ENCODE measurements at regions of chr4 and their contacts with region 1.

Region 1: GRCh38 chr4:155667568-155668511 is 1.2 kb downstream of the GUCY1A1 start:
- DNase-seq: peak; percentile 66
- H3K4me3 ChIP-seq: peak overlapping the region; percentile 39 to 83 (median 46)
- H3K27ac ChIP-seq: no peak overlapping the region
- H3K4me1 ChIP-seq: peaks cover 19% of the 10 kb centered on the region
- H3K27me3 ChIP-seq: peaks cover 12 to 16% of the 10 kb centered on the region in 2 experiments
- CTCF ChIP-seq: no peak
- POLR2A ChIP-seq: no peak

Region 2: GRCh38 chr4:154877110-154877760 is 790.6 kb before region 1 on chr4:
- CTCF ChIA-PET with region 1: no interaction called
- POLR2A ChIA-PET with region 1: no interaction called
- dilution Hi-C with region 1: no loop called
- intact Hi-C with region 1: no loop called
- DNase-seq: peak; percentile 6
- H3K4me3 ChIP-seq: no peak overlapping the region
- H3K27ac ChIP-seq: no peak overlapping the region
- H3K4me1 ChIP-seq: no peaks in the 10 kb centered on the region
- H3K27me3 ChIP-seq: no peaks in the 10 kb centered on the region
- CTCF ChIP-seq: no peak
- POLR2A ChIP-seq: no peak

Region 3: GRCh38 chr4:155615081-155615887 is 52.6 kb before region 1 on chr4:
- CTCF ChIA-PET with region 1: no interaction called
- POLR2A ChIA-PET with region 1: no interaction called
- dilution Hi-C with region 1: no loop called
- intact Hi-C with region 1: no loop called
- DNase-seq: peak; percentile 37
- H3K4me3 ChIP-seq: no peak overlapping the region
- H3K27ac ChIP-seq: no peak overlapping the region
- H3K4me1 ChIP-seq: peaks cover 7% of the 10 kb centered on the region
- H3K27me3 ChIP-seq: no peaks in the 10 kb centered on the region
- CTCF ChIP-seq: no peak
- POLR2A ChIP-seq: no peak

Region 4: GRCh38 chr4:155629183-155629825 is 38.5 kb before region 1 on chr4:
- CTCF ChIA-PET with region 1: interaction called, 3 read pairs
- POLR2A ChIA-PET with region 1: no interaction called
- dilution Hi-C with region 1: no loop called
- intact Hi-C with region 1: loop called (anchors 2 kb)
- DNase-seq: peak; percentile 93
- H3K4me3 ChIP-seq: no peak overlapping the region
- H3K27ac ChIP-seq: peak overlapping the region; percentile 11
- H3K4me1 ChIP-seq: peaks cover 15% of the 10 kb centered on the region
- H3K27me3 ChIP-seq: no peaks in the 10 kb centered on the region
- CTCF ChIP-seq: no peak
- POLR2A ChIP-seq: no peak

Region 5: DNA sequence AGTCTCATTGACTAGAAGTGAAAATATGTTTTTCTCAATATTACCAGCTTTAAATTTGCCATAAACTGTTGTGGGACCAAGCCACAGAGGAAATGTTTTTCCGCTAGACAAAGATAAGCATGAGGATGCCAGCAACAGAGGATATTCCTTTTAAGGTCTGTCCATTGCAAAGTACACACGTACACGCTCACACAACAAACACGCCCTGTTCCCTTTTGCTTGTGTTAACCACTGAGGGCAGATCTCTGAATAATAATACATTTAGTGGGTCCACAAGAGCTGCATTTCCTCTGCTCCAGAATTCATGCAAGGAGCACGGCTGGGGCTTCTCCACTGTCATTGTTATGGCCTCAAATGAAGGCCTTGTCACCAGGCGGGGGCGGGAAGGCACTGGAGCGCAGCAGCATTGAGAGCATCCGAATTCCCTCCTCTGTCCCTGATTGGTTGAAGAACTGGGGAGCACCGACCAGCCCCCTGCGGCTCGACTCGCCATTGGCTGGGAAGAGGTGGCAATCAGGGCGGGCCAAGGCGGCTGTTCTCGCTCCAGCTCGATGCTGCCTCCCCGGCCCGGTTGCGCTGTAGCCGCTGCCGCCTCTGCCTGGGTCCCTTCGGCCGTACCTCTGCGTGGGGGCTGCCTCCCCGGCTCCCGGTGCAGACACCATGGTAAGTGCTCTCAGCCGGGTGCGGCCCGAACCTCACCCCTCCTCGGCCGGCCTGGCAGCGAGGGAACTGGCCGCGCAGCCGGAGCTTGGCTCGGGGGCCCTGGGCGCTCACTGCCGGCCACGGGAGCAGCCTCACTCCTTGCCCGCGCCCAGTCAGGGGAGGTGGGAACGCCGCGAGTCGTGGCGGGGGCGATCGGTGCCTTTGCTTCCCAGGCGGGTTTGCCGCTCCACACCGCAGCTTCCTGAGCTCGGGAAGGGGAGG is 90.9 kb after region 1 on chr4 and contains the start of gene GUCY1B1:
- CTCF ChIA-PET with region 1: no interaction called
- POLR2A ChIA-PET with region 1: no interaction called
- dilution Hi-C with region 1: no loop called
- intact Hi-C with region 1: loop called (anchors 1 kb)
- DNase-seq: peak; percentile 95
- H3K4me3 ChIP-seq: peak within 1 kb of the TSS; percentile 32 to 53 (median 44)
- H3K27ac ChIP-seq: no peak within 1 kb of the TSS
- H3K4me1 ChIP-seq: peaks cover 6% of the 10 kb centered on the region
- H3K27me3 ChIP-seq: no peaks in the 10 kb centered on the region
- CTCF ChIP-seq: peak; percentile 30 to 62
- POLR2A ChIP-seq: no peak
- total RNA-seq, gene GUCY1B1: 4.7 and 7.0 TPM in 2 replicates

Measured in endothelial cell of umbilical vein (primary cell).